ENCODE measurements at regions of chr16 and their contacts with region 1.

Region 1: GRCh38 chr16:25031441-25032307 is 16.5 kb upstream of the ARHGAP17 start:
- DNase-seq: peak; percentile 95
- ATAC-seq: peak; percentile 98
- H3K4me3 ChIP-seq: peak overlapping the region; percentile 70 to 91 (median 74)
- H3K4me3 Mint-ChIP-seq: peak overlapping the region; percentile 85
- H3K27ac ChIP-seq: peak overlapping the region; percentile 76 to 81
- H3K27ac Mint-ChIP-seq: peak overlapping the region; percentile 87
- H3K4me1 ChIP-seq: peaks cover 29 to 47% of the 10 kb centered on the region in 2 donors
- H3K4me1 Mint-ChIP-seq: peaks cover 45% of the 10 kb centered on the region
- H3K27me3 ChIP-seq: no peaks in the 10 kb centered on the region
- H3K27me3 Mint-ChIP-seq: no peaks in the 10 kb centered on the region
- CTCF ChIP-seq: no peak

Region 2: GRCh38 chr16:25014500-25015147 is 17.1 kb before region 1 on chr16:
- CTCF ChIA-PET with region 1: interaction called, 10 read pairs
- POLR2A ChIA-PET with region 1: interaction called, 13 read pairs
- intact Hi-C with region 1: loop called (anchors 1 kb)
- DNase-seq: no peak
- ATAC-seq: peak; percentile 16
- H3K4me3 ChIP-seq: peak overlapping the region; percentile 73 to 92 (median 79)
- H3K4me3 Mint-ChIP-seq: peak overlapping the region; percentile 97
- H3K27ac ChIP-seq: peak overlapping the region; percentile 61 to 89
- H3K27ac Mint-ChIP-seq: peak overlapping the region; percentile 96
- H3K4me1 ChIP-seq: peaks cover 75 to 80% of the 10 kb centered on the region in 2 donors
- H3K4me1 Mint-ChIP-seq: peaks cover 84% of the 10 kb centered on the region
- H3K27me3 ChIP-seq: no peaks in the 10 kb centered on the region
- H3K27me3 Mint-ChIP-seq: no peaks in the 10 kb centered on the region
- CTCF ChIP-seq: no peak

Region 3: DNA sequence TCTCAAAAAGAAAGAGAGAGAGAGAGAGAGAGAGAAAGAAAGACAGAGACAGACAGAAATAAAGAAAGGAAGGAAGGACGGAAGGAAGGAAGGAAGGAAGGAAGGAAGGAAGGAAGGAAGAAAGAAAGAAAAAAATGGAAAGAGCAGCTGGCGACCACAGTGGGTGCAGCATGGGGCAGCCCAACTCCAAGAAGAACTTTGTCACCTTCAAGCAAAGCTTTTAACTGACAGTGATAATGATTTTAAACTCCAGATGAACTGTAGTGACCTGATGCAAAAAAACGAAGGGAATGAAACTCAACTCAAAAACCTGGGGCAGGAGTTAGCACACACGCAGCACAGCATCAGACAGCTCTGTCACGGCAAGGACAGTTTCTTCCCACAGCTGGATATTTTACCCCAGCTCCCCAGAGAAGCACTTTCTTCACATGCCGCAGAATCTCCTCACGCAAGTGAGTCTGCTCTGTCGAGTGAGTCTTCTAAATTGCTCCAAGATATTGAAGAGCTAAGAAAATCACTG is 11.5 kb before region 1 on chr16:
- CTCF ChIA-PET with region 1: interaction called, 12 read pairs
- POLR2A ChIA-PET with region 1: interaction called, 13 read pairs
- intact Hi-C with region 1: loop called (anchors 1 kb)
- DNase-seq: no peak
- ATAC-seq: no peak
- H3K4me3 ChIP-seq: peak overlapping the region in 2 of 5 experiments; percentile 2 to 12
- H3K4me3 Mint-ChIP-seq: peak overlapping the region; percentile 72
- H3K27ac ChIP-seq: peak overlapping the region; percentile 65 to 77
- H3K27ac Mint-ChIP-seq: peak overlapping the region; percentile 66
- H3K4me1 ChIP-seq: peaks cover 55 to 75% of the 10 kb centered on the region in 2 donors
- H3K4me1 Mint-ChIP-seq: peaks cover 64% of the 10 kb centered on the region
- H3K27me3 ChIP-seq: no peaks in the 10 kb centered on the region
- H3K27me3 Mint-ChIP-seq: no peaks in the 10 kb centered on the region
- CTCF ChIP-seq: no peak